Psoas muscle (tissue), 8 donors: ENCODE measurements at regions of chr14 and their contacts with region 1.

Region 1: DNA sequence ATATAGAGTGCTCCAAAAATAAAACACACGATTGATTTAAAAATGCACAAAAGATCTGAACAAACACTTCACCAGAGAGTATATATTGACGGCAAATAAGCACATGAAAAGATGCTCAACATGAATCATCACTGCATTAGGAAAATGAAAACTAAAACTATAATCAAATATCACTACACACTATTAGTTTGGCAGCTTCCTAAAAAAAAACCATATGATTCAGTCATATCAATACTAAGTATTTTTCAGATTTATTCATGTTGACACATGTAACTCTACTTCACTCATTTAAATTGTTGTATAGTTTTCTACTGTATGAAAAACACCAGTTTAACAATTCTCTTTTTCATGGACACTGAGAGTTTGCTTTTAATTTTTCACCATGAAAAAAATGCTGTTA is 41.6 kb downstream of the EXOC5 start:
- DNase-seq: no peak
- ATAC-seq: no peak
- H3K4me3 ChIP-seq: no peak overlapping the region
- H3K27ac ChIP-seq: no peak overlapping the region
- H3K4me1 ChIP-seq: no peaks in the 10 kb centered on the region
- H3K27me3 ChIP-seq: no peaks in the 10 kb centered on the region
- CTCF ChIP-seq: no peak

Region 2: GRCh38 chr14:56617084-56617483 is 610.0 kb before region 1 on chr14:
- intact Hi-C with region 1: loop called in 1 of 2 experiments (anchors 10 kb)
- DNase-seq: no peak
- ATAC-seq: no peak
- H3K4me3 ChIP-seq: no peak overlapping the region
- H3K27ac ChIP-seq: no peak overlapping the region
- H3K4me1 ChIP-seq: no peaks in the 10 kb centered on the region
- H3K27me3 ChIP-seq: no peaks in the 10 kb centered on the region
- CTCF ChIP-seq: no peak

Region 3: GRCh38 chr14:57189070-57189469 is 38.0 kb before region 1 on chr14:
- intact Hi-C with region 1: no loop called
- DNase-seq: no peak
- ATAC-seq: no peak
- H3K4me3 ChIP-seq: no peak overlapping the region
- H3K27ac ChIP-seq: no peak overlapping the region
- H3K4me1 ChIP-seq: no peaks in the 10 kb centered on the region
- H3K27me3 ChIP-seq: peaks cover 0 to 3% (median 0%) of the 10 kb centered on the region in 3 donors
- CTCF ChIP-seq: peak; percentile 15

Region 4: DNA sequence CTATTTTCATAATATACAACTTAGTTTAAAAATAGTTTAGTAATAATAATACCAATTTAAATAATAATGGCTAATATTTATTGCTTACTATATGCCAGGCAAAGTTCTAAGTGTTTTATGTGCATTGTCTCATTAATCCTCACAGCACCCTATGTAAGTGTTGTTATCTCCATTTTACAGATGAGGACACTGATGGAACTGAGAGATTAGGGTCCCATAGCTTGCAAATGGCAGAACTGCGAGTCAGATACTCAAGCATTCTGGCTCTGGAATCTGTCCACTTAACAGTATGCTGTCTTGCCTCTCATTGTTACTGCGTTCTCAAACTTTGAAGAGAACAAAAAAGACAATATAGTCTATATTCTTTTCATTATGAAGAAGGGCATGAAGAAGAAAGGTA is 60.7 kb after region 1 on chr14:
- intact Hi-C with region 1: loop called in 1 of 2 experiments (anchors 10 kb)
- DNase-seq: no peak
- ATAC-seq: no peak
- H3K4me3 ChIP-seq: no peak overlapping the region
- H3K27ac ChIP-seq: no peak overlapping the region
- H3K4me1 ChIP-seq: no peaks in the 10 kb centered on the region
- H3K27me3 ChIP-seq: no peaks in the 10 kb centered on the region
- CTCF ChIP-seq: no peak